Endothelial cell of umbilical vein (primary cell): ENCODE measurements at regions of chr5 and their contacts with region 1.

Region 1: GRCh38 chr5:95646554-95647431 is at the start of gene RFESD:
- DNase-seq: peak; percentile 89
- H3K4me3 ChIP-seq: peak within 1 kb of the TSS; percentile 61 to 75 (median 67)
- H3K27ac ChIP-seq: peak within 1 kb of the TSS; percentile 91
- H3K4me1 ChIP-seq: peaks cover 9% of the 10 kb centered on the region
- H3K27me3 ChIP-seq: no peaks in the 10 kb centered on the region
- CTCF ChIP-seq: peak in 1 of 2 donors; percentile 2
- POLR2A ChIP-seq: peak; percentile 86
- total RNA-seq, gene RFESD: 1.1 and 2.0 TPM in 2 replicates

Region 2: DNA sequence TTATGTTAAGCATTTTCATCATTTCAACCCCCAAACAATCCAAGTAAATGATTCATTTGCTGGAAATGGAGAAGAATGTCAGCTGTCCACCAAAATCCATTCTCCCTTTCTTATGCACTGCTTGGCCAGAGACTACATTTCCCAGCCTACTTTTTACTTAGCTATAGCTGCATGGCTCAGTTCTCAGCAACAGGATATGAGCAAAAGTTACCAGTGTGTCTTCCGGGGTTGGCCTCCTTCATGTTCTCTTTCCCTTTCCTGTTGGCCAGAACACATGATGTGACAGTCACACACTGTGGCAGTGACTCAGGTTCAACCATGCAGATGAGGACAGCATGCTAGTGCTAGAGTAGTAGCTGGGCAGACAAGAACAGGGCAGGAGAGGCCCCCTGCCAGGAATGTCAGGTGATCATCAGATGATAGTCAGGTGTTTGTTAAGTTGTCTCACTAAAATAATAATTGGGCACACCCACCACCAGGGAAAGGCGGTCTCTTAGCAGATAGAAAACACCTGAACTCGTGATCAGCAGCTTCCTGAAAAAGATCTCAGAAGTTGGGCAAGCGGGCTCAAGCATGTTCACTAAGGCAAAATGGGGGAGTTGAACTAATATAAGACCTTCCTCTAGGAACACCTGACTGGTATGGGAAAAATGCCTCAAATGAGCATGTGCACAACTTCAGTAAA is 14.7 kb before region 1 on chr5:
- CTCF ChIA-PET with region 1: interaction called, 17 read pairs
- POLR2A ChIA-PET with region 1: interaction called, 3 read pairs
- dilution Hi-C with region 1: no loop called
- intact Hi-C with region 1: no loop called
- DNase-seq: peak; percentile 68
- H3K4me3 ChIP-seq: no peak overlapping the region
- H3K27ac ChIP-seq: peak overlapping the region; percentile 44
- H3K4me1 ChIP-seq: peaks cover 9% of the 10 kb centered on the region
- H3K27me3 ChIP-seq: no peaks in the 10 kb centered on the region
- CTCF ChIP-seq: no peak
- POLR2A ChIP-seq: no peak

Region 3: DNA sequence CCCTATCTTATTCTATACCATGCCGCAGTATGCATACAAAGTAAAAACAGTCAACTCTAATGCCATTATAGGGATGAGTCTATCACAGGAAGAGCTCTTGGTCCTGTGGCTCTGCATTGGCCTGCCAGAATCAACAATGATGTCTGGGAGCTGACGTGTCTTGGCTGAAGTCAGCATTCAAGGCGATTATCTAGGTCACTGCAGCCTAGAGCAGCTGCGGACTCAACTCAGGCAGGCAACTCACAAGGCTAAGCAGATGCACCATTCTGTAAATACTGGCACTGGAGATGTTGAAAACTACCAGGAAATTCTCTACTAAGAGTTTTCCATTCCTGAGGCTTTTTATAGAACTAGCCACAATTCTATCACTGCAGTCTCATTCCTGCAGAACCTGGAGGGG is 22.7 kb after region 1 on chr5:
- CTCF ChIA-PET with region 1: interaction called, 15 read pairs
- POLR2A ChIA-PET with region 1: no interaction called
- dilution Hi-C with region 1: no loop called
- intact Hi-C with region 1: no loop called
- DNase-seq: peak; percentile 84
- H3K4me3 ChIP-seq: no peak overlapping the region
- H3K27ac ChIP-seq: peak overlapping the region; percentile 69
- H3K4me1 ChIP-seq: peaks cover 23% of the 10 kb centered on the region
- H3K27me3 ChIP-seq: no peaks in the 10 kb centered on the region
- CTCF ChIP-seq: no peak
- POLR2A ChIP-seq: no peak

Region 4: DNA sequence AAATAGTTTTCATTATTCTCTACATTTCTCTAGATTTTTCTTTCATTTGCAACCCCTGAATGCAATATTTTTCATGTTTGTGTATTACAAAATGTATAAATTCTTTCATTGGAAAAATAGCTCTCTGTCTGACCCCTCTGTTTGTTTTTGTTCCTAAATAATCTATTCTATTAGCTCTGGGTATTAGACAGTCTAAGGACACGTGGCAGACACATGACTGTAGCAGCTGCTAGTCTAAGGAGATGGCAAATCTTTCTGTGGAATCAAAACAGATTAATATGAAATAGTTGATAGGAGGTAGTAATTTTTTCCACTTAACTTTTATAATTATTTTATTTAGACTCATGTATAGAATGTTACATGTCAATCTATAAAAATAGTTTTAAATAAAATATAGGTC is 57.4 kb after region 1 on chr5:
- CTCF ChIA-PET with region 1: no interaction called
- POLR2A ChIA-PET with region 1: no interaction called
- dilution Hi-C with region 1: no loop called
- intact Hi-C with region 1: no loop called
- DNase-seq: no peak
- H3K4me3 ChIP-seq: no peak overlapping the region
- H3K27ac ChIP-seq: no peak overlapping the region
- H3K4me1 ChIP-seq: no peaks in the 10 kb centered on the region
- H3K27me3 ChIP-seq: no peaks in the 10 kb centered on the region
- CTCF ChIP-seq: no peak
- POLR2A ChIP-seq: no peak

Region 5: GRCh38 chr5:95961617-95962474 is 315.1 kb after region 1 on chr5 and contains the start of gene ELL2:
- CTCF ChIA-PET with region 1: interaction called, 3 read pairs
- POLR2A ChIA-PET with region 1: no interaction called
- dilution Hi-C with region 1: no loop called
- intact Hi-C with region 1: loop called (anchors 5 kb)
- DNase-seq: peak; percentile 98
- H3K4me3 ChIP-seq: peak within 1 kb of the TSS; percentile 66 to 94 (median 79)
- H3K27ac ChIP-seq: peak within 1 kb of the TSS; percentile 88
- H3K4me1 ChIP-seq: peaks cover 12% of the 10 kb centered on the region
- H3K27me3 ChIP-seq: no peaks in the 10 kb centered on the region
- CTCF ChIP-seq: no peak
- POLR2A ChIP-seq: peak; percentile 68
- total RNA-seq, gene ELL2: 26.0 and 39.8 TPM in 2 replicates